CD4-positive, alpha-beta memory T cell (primary cell): ENCODE measurements at regions of chr14 and their contacts with region 1.

Region 1: DNA sequence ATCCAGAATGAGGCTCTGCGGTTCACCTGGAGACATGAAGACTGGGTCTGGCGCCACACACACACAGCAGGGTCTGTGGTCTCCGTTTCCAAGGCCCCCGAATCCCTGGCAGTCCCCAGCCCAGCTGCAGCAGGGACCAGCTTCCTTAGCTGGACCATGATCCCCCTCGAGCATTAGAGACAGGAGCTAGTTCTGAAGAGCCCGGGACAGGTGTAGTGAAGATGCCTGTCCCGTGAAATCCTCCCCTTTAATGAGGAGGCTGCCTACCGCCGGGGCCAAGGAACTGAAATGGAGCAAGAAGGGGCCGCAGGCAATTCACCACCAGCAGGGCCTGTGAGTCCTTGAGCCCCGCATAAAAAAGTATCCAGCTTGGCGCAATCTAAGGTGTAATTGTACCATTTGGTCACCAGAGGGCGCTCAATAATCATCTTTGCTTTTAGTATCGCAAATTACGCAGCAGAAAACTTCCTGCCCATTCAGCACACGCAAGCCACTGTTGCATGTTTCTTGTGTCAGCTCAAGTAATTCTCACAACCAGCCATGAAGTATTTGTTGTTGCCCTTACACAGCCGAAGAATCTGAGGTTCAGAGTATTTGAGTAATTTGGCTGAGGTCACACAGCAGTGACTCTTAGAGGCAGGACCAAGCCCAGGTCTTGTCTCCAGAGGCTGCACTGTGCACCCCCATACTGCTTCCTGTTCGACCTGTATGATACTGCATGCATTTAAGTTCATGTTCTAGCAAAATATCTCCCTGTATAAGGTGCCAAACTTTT is 54.3 kb upstream of the PPP2R5C start:
- DNase-seq: peak; percentile 70 to 83 (median 82)
- H3K4me3 ChIP-seq: peak overlapping the region; percentile 21 to 52
- H3K4me3 Mint-ChIP-seq: peak overlapping the region; percentile 34 to 79 (median 74)
- H3K27ac ChIP-seq: peak overlapping the region; percentile 57
- H3K27ac Mint-ChIP-seq: peak overlapping the region; percentile 59 to 94 (median 90)
- H3K4me1 ChIP-seq: peaks cover 52% of the 10 kb centered on the region
- H3K4me1 Mint-ChIP-seq: peaks cover 23 to 54% (median 41%) of the 10 kb centered on the region in 4 donors
- H3K27me3 ChIP-seq: no peaks in the 10 kb centered on the region
- H3K27me3 Mint-ChIP-seq: no peaks in the 10 kb centered on the region

Region 2: DNA sequence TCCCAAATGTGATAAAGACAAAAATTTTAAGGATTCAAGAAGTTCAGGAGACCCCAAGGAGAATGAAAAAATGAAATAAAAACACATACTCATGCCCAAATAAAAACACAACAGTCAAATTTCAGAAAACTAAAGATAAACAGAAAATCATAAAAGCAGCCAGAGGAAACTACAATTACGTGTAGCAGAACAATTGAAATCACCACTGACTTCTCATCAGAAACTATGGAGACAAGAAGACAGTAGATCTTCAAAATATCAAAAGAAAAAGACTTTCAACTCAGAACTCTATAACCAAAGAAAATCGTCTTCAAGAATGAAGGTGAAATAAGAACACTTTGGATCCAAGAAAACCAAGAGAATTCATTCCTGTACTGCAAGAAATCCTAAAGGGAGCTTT is 91.1 kb before region 1 on chr14:
- CTCF ChIA-PET with region 1: no interaction called
- POLR2A ChIA-PET with region 1: no interaction called
- intact Hi-C with region 1: no loop called
- DNase-seq: no peak
- H3K4me3 ChIP-seq: no peak overlapping the region
- H3K4me3 Mint-ChIP-seq: no peak overlapping the region
- H3K27ac ChIP-seq: no peak overlapping the region
- H3K27ac Mint-ChIP-seq: no peak overlapping the region
- H3K4me1 ChIP-seq: no peaks in the 10 kb centered on the region
- H3K4me1 Mint-ChIP-seq: no peaks in the 10 kb centered on the region
- H3K27me3 ChIP-seq: no peaks in the 10 kb centered on the region
- H3K27me3 Mint-ChIP-seq: peaks cover 21 to 25% of the 10 kb centered on the region in 2 donors

Region 3: DNA sequence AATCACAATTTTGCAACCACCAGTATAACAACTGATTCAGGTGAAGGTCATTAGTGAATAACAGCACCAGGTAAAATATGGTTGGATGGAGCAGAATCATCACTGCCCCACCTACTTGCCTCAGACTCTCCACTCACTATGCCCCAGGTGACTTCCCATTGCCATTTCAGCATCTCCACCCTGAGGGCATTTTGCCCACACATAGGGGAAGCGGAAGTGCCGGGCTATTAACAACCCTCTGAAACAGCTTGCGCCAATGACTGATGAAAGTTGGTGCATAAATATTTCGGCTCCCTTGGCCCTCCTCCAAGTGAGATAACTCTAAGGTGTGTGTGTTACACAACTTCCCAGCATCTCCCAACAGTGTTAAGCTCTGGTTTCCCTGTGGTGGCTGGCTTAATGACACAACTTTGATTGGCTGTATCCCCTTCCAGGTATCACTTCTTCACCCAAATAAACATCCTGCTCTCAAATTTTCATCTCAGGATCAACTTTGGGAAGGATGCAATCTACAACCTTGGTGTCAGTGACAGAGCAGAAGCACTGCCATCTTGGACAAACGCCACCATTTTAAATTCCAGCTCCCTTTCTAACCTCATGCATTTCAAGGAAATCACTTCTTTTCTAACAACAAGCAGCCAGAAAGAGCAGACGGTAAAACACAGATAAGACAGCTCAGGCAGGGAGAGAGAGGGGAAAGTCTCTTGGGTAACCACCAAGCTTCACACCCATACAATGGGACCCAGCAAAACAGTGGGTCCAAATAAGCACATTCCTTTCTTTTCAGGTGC is 19.3 kb before region 1 on chr14:
- CTCF ChIA-PET with region 1: no interaction called
- POLR2A ChIA-PET with region 1: no interaction called
- intact Hi-C with region 1: no loop called
- DNase-seq: no peak
- H3K4me3 ChIP-seq: no peak overlapping the region
- H3K4me3 Mint-ChIP-seq: no peak overlapping the region
- H3K27ac ChIP-seq: no peak overlapping the region
- H3K27ac Mint-ChIP-seq: no peak overlapping the region
- H3K4me1 ChIP-seq: no peaks in the 10 kb centered on the region
- H3K4me1 Mint-ChIP-seq: no peaks in the 10 kb centered on the region
- H3K27me3 ChIP-seq: peaks cover 3% of the 10 kb centered on the region
- H3K27me3 Mint-ChIP-seq: peaks cover 3 to 10% of the 10 kb centered on the region in 2 donors

Region 4: GRCh38 chr14:101721951-101722661 is 14.9 kb after region 1 on chr14:
- CTCF ChIA-PET with region 1: interaction called, 28 read pairs
- POLR2A ChIA-PET with region 1: interaction called, 103 read pairs
- intact Hi-C with region 1: loop called (anchors 1 kb)
- DNase-seq: peak; percentile 90 to 93 (median 91)
- H3K4me3 ChIP-seq: peak overlapping the region in 1 of 2 donors; percentile 55
- H3K4me3 Mint-ChIP-seq: peak overlapping the region; percentile 66 to 92 (median 82)
- H3K27ac ChIP-seq: peak overlapping the region; percentile 84
- H3K27ac Mint-ChIP-seq: peak overlapping the region; percentile 92 to 100 (median 97)
- H3K4me1 ChIP-seq: peaks cover 61% of the 10 kb centered on the region
- H3K4me1 Mint-ChIP-seq: peaks cover 35 to 69% (median 46%) of the 10 kb centered on the region in 4 donors
- H3K27me3 ChIP-seq: no peaks in the 10 kb centered on the region
- H3K27me3 Mint-ChIP-seq: no peaks in the 10 kb centered on the region

Region 5: GRCh38 chr14:101761032-101761880 is 54.0 kb after region 1 on chr14 and contains the start of gene PPP2R5C:
- CTCF ChIA-PET with region 1: interaction called, 22 read pairs
- POLR2A ChIA-PET with region 1: interaction called, 68 read pairs
- intact Hi-C with region 1: loop called (anchors 1 kb)
- DNase-seq: peak; percentile 86 to 90 (median 87)
- H3K4me3 ChIP-seq: peak within 1 kb of the TSS; percentile 49 to 94
- H3K4me3 Mint-ChIP-seq: peak within 1 kb of the TSS; percentile 92 to 96 (median 94)
- H3K27ac ChIP-seq: peak within 1 kb of the TSS; percentile 82
- H3K27ac Mint-ChIP-seq: peak within 1 kb of the TSS; percentile 92 to 96 (median 95)
- H3K4me1 ChIP-seq: peaks cover 44% of the 10 kb centered on the region
- H3K4me1 Mint-ChIP-seq: peaks cover 32 to 45% (median 39%) of the 10 kb centered on the region in 4 donors
- H3K27me3 ChIP-seq: no peaks in the 10 kb centered on the region
- H3K27me3 Mint-ChIP-seq: no peaks in the 10 kb centered on the region
- total RNA-seq, gene PPP2R5C: 584 to 620 TPM

Region 6: GRCh38 chr14:101781240-101782061 is 74.2 kb after region 1 on chr14:
- CTCF ChIA-PET with region 1: interaction called, 10 read pairs
- POLR2A ChIA-PET with region 1: no interaction called
- intact Hi-C with region 1: no loop called
- DNase-seq: peak in 4 of 5 donors; percentile 26 to 41 (median 34)
- H3K4me3 ChIP-seq: peak overlapping the region; percentile 11 to 45
- H3K4me3 Mint-ChIP-seq: peak overlapping the region; percentile 67 to 86 (median 74)
- H3K27ac ChIP-seq: peak overlapping the region; percentile 8
- H3K27ac Mint-ChIP-seq: peak overlapping the region in 4 of 7 donors; percentile 25 to 83 (median 38)
- H3K4me1 ChIP-seq: peaks cover 8% of the 10 kb centered on the region
- H3K4me1 Mint-ChIP-seq: peaks cover 12 to 26% (median 21%) of the 10 kb centered on the region in 4 donors
- H3K27me3 ChIP-seq: no peaks in the 10 kb centered on the region
- H3K27me3 Mint-ChIP-seq: no peaks in the 10 kb centered on the region

Region 7: GRCh38 chr14:101834800-101835547 is 127.7 kb after region 1 on chr14:
- CTCF ChIA-PET with region 1: interaction called, 7 read pairs
- POLR2A ChIA-PET with region 1: interaction called, 20 read pairs
- intact Hi-C with region 1: no loop called
- DNase-seq: no peak
- H3K4me3 ChIP-seq: no peak overlapping the region
- H3K4me3 Mint-ChIP-seq: peak overlapping the region in 5 of 8 donors; percentile 15 to 62 (median 35)
- H3K27ac ChIP-seq: peak overlapping the region; percentile 31
- H3K27ac Mint-ChIP-seq: peak overlapping the region; percentile 65 to 97 (median 83)
- H3K4me1 ChIP-seq: peaks cover 100% of the 10 kb centered on the region
- H3K4me1 Mint-ChIP-seq: peaks cover 61 to 99% (median 82%) of the 10 kb centered on the region in 4 donors
- H3K27me3 ChIP-seq: no peaks in the 10 kb centered on the region
- H3K27me3 Mint-ChIP-seq: no peaks in the 10 kb centered on the region

Region 8: DNA sequence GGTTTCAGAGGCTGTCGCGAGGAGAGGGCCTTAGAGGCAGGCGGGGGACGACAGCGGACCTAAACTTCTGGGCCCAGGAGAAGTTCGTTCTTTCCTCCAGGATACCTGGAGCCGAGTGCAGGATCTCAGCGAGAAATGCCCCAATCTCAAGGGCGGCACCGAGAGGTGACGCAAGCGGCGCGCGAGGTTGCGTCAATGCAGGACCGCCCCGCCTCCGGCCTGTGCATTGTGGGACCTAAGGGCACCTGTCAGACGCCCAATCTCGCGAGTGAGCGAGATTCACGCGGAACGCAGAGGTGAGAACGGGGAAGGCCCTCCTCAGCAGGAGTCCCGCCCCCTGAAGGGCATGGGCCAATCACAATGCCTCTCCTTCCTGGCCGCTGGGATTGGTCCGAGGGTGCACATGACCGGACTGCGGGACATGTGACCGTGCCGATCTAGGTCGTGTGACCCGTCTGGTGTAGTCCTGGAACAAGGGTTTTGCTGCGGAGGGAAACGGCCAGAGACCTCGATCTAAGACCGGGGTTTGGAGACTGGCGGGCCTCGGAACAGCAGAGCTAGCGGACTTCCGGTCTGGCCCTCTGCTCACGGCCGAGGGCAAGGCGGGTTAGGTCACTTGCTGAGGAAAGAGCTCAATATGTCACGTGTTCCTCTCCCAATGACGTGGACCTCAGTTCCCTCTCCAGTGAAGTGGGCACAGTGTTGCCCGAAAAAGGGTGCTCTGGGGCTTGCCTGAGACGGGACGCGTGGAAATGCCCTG is 240.8 kb after region 1 on chr14:
- CTCF ChIA-PET with region 1: interaction called, 3 read pairs
- POLR2A ChIA-PET with region 1: interaction called, 21 read pairs
- intact Hi-C with region 1: loop called (anchors 1 kb)
- DNase-seq: peak; percentile 99 to 100 (median 100)
- H3K4me3 ChIP-seq: peak overlapping the region; percentile 87 to 98
- H3K4me3 Mint-ChIP-seq: peak overlapping the region; percentile 92 to 99 (median 96)
- H3K27ac ChIP-seq: peak overlapping the region; percentile 94
- H3K27ac Mint-ChIP-seq: peak overlapping the region; percentile 99 to 100 (median 100)
- H3K4me1 ChIP-seq: peaks cover 13% of the 10 kb centered on the region
- H3K4me1 Mint-ChIP-seq: peaks cover 6 to 31% (median 21%) of the 10 kb centered on the region in 4 donors
- H3K27me3 ChIP-seq: peaks cover 5% of the 10 kb centered on the region
- H3K27me3 Mint-ChIP-seq: peaks cover 9 to 16% of the 10 kb centered on the region in 2 donors

Region 9: GRCh38 chr14:102139248-102140026 is 432.2 kb after region 1 on chr14 and contains the start of gene WDR20:
- CTCF ChIA-PET with region 1: no interaction called
- POLR2A ChIA-PET with region 1: no interaction called
- intact Hi-C with region 1: loop called (anchors 5 kb)
- DNase-seq: peak; percentile 98 to 100 (median 100)
- H3K4me3 ChIP-seq: peak within 1 kb of the TSS; percentile 65 to 91
- H3K4me3 Mint-ChIP-seq: peak within 1 kb of the TSS; percentile 97 to 99 (median 98)
- H3K27ac ChIP-seq: peak within 1 kb of the TSS; percentile 92
- H3K27ac Mint-ChIP-seq: peak within 1 kb of the TSS; percentile 95 to 98 (median 97)
- H3K4me1 ChIP-seq: peaks cover 30% of the 10 kb centered on the region
- H3K4me1 Mint-ChIP-seq: peaks cover 19 to 25% (median 21%) of the 10 kb centered on the region in 4 donors
- H3K27me3 ChIP-seq: no peaks in the 10 kb centered on the region
- H3K27me3 Mint-ChIP-seq: no peaks in the 10 kb centered on the region
- total RNA-seq, gene WDR20: 56.8 to 57.9 TPM